MCF 10A (cell line): ENCODE measurements at regions of chr1 and their contacts with region 1.

Region 1: DNA sequence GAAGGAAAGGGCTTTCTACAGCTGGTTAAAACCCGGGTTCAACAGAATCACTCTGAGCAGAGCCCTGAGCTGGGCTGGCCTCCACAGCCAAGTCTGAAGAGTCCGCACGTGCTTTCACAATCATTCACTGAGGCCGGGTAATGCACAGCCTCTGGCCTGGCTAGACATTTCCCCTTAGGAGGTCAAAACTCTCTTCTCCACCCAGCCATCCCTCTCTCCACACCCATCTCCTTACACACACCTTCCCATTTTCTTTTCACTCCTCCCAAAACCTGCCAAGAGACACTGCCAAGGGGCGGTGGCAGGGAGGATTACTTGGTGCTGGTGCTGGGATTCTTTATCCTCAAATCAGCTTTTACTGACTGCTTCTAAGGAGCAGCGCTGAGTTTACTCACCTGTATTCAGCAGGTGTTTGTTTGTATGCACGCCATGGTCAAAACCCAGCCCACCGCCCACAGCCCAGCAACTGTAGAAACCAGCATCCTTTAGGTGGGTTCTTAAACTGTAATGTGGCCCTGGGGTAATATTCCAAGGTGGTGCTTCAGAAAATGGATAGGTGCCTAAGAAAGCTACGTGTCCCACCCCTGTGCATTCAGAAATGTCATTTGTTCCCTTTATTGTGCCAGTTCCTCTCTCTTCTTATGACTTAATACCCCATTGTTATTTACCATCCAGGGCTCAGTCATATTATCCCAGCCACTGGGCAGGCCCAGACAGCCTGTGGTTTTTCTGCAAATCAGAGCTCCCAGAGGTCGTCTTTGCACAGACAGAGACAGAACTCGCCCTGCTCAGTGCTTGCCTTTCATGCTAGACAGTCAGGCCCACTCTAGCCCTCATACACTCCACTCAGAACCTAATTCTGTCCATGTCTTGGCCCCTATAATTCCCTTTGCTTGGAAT is 80.2 kb downstream of the ADSS2 start:
- DNase-seq: peak; percentile 77
- H3K4me3 Mint-ChIP-seq: no peak overlapping the region
- H3K27ac Mint-ChIP-seq: peak overlapping the region; percentile 9
- H3K4me1 Mint-ChIP-seq: peaks cover 29% of the 10 kb centered on the region
- H3K27me3 Mint-ChIP-seq: no peaks in the 10 kb centered on the region
- CTCF ChIP-seq: no peak

Region 2: GRCh38 chr1:243287652-243288051 is 1083.8 kb before region 1 on chr1:
- CTCF ChIA-PET with region 1: no interaction called
- POLR2A ChIA-PET with region 1: no interaction called
- intact Hi-C with region 1: no loop called
- DNase-seq: peak; percentile 90
- H3K4me3 Mint-ChIP-seq: no peak overlapping the region
- H3K27ac Mint-ChIP-seq: peak overlapping the region; percentile 29
- H3K4me1 Mint-ChIP-seq: peaks cover 13% of the 10 kb centered on the region
- H3K27me3 Mint-ChIP-seq: no peaks in the 10 kb centered on the region
- CTCF ChIP-seq: no peak

Region 3: GRCh38 chr1:244353551-244354091 is 17.9 kb before region 1 on chr1:
- CTCF ChIA-PET with region 1: interaction called, 4 read pairs
- POLR2A ChIA-PET with region 1: interaction called, 16 read pairs
- intact Hi-C with region 1: no loop called
- DNase-seq: peak; percentile 99
- H3K4me3 Mint-ChIP-seq: no peak overlapping the region
- H3K27ac Mint-ChIP-seq: peak overlapping the region; percentile 97
- H3K4me1 Mint-ChIP-seq: peaks cover 43% of the 10 kb centered on the region
- H3K27me3 Mint-ChIP-seq: no peaks in the 10 kb centered on the region
- CTCF ChIP-seq: no peak

Region 4: GRCh38 chr1:244381878-244382565 is 10.5 kb after region 1 on chr1:
- CTCF ChIA-PET with region 1: interaction called, 4 read pairs
- POLR2A ChIA-PET with region 1: interaction called, 16 read pairs
- intact Hi-C with region 1: no loop called
- DNase-seq: peak; percentile 81
- H3K4me3 Mint-ChIP-seq: no peak overlapping the region
- H3K27ac Mint-ChIP-seq: peak overlapping the region; percentile 8
- H3K4me1 Mint-ChIP-seq: peaks cover 11% of the 10 kb centered on the region
- H3K27me3 Mint-ChIP-seq: no peaks in the 10 kb centered on the region
- CTCF ChIP-seq: no peak

Region 5: GRCh38 chr1:244397131-244397530 is 25.6 kb after region 1 on chr1:
- CTCF ChIA-PET with region 1: interaction called, 3 read pairs
- POLR2A ChIA-PET with region 1: interaction called, 15 read pairs
- intact Hi-C with region 1: no loop called
- DNase-seq: no peak
- H3K4me3 Mint-ChIP-seq: no peak overlapping the region
- H3K27ac Mint-ChIP-seq: no peak overlapping the region
- H3K4me1 Mint-ChIP-seq: peaks cover 16% of the 10 kb centered on the region
- H3K27me3 Mint-ChIP-seq: no peaks in the 10 kb centered on the region
- CTCF ChIP-seq: no peak